PC-9 (cell line): ENCODE measurements at regions of chr3 and their contacts with region 1.

Region 1: DNA sequence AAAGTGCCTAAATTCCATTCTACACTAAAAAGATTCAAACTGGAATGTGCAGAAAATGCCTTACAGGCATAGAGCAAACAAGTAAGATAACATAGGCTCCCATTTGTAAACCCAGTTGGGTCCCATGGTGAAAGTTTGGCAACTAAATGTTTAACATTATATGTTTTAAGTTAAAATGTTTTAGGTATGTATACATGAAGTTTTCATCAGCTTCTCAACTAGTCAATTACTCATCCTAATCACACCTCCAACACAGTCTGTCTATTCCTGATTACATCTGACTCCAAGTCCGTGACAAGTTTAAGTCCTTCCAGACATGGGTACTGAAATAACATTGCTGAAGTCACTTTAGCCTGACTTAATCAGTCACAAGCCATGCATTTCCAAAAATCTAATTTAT is 25.0 kb downstream of the MYLK start:
- DNase-seq: no peak
- H3K4me3 ChIP-seq: no peak overlapping the region
- H3K27ac ChIP-seq: no peak overlapping the region
- H3K4me1 ChIP-seq: no peaks in the 10 kb centered on the region
- H3K27me3 ChIP-seq: no peaks in the 10 kb centered on the region
- CTCF ChIP-seq: no peak

Region 2: GRCh38 chr3:122578069-122578740 is 1281.0 kb before region 1 on chr3:
- CTCF ChIA-PET with region 1: no interaction called
- POLR2A ChIA-PET with region 1: interaction called, 18 read pairs
- intact Hi-C with region 1: no loop called
- DNase-seq: no peak
- H3K4me3 ChIP-seq: no peak overlapping the region
- H3K27ac ChIP-seq: no peak overlapping the region
- H3K4me1 ChIP-seq: peaks cover 7% of the 10 kb centered on the region
- H3K27me3 ChIP-seq: no peaks in the 10 kb centered on the region
- CTCF ChIP-seq: no peak